ENCODE measurements at regions of chr9 and their contacts with region 1.

Region 1: DNA sequence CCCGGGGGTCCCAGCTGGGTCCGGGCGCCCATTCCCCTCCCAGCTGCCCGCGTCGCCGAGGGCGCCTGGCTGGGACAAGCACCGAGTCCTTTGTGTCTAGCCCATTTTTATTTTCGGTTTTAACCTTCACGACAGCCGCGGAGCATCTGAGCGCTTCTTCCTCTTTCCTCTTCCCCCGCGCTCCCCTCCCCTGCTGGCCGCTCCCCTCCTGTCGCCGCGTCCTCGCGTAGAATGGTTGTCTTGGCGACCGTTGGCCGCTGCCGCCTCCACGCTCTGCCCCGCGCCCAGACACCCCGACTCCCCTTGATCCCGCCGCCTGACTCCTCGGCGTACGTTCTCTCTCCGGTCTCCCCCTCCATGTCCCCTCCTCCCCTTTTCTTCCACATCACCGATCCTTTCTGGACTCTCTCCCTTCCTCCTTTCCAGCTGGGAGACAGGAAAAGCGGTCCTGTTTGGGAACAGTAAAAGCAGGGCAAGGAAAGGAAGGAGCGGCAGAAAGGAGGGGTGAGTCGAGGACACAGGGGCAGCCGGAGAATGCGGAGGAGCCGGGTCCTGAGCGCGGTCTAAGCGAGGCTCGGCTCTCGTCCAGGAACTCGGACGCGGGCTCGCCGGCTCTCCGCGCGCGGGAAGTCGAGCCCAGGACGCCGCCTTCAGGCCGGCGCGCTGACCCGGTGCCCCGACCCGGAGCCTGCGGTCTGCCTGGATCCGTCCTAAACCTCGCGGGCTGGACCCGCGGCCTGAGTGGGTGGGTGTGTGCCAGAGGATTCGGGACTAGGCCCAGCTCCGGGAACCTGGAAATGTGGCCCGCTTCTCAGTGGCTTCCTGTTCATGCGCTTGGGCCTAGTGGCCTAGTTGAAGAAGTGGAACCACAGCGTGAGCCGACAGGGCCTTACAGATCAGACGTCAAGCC is 841 bp downstream of the CDKN2B-AS1 start:
- DNase-seq: peak; percentile 93
- H3K4me3 ChIP-seq: peak overlapping the region; percentile 78
- H3K27ac ChIP-seq: peak overlapping the region; percentile 97
- H3K4me1 ChIP-seq: peaks cover 21% of the 10 kb centered on the region
- CTCF ChIP-seq: peak; percentile 59

Region 2: DNA sequence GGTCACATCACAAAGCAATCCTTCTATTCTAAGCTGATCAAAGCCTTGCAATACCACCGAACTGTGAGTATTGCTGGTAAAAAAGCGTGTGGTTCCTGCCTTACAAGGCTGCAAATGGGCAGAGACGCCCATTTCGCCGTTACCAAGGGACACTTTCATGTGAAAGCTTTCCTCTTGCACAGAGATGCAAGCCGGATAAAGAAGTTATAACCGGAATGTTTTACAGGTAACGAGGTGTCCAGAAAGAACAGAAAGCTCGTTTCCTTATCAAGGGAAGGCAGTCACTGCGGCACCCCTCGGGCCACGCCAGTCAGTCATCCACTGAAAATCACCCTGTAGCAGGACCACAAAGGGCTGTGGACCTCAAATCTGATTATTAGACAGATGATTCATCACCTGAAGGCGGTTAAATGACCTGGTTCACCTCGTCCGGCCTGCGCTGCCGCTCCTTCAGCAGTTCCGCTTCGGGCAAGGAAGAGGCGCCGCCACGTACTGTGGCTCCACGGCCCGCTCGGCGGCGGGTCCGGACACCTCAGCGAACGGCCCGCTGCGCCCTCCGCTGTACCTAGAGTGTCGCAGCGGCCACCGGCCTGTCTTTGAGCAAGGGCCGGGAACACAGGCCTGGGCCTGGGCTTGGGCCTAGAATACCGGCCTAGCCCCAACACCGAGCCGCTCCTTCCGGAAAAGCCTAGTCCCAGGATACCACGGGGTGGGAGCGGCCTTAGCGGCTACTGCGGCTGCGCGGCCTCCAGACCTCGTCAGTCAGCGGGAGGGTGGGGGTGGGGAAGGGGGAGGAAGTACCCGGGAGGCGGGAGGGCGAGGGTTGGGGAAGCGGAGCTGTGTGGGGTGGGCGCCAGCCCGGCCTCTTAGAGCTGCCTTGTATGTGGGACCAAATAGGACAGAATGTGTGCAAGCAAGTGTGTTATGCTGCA is 660.5 kb before region 1 on chr9 and contains the start of gene KLHL9:
- CTCF ChIA-PET with region 1: no interaction called
- POLR2A ChIA-PET with region 1: no interaction called
- intact Hi-C with region 1: loop called (anchors 5 kb)
- DNase-seq: peak; percentile 92
- H3K4me3 ChIP-seq: peak within 1 kb of the TSS; percentile 83
- H3K27ac ChIP-seq: peak within 1 kb of the TSS; percentile 62
- H3K4me1 ChIP-seq: peaks cover 45% of the 10 kb centered on the region
- CTCF ChIP-seq: no peak
- total RNA-seq, gene KLHL9: 19.3 and 19.9 TPM in 2 replicates

Region 3: GRCh38 chr9:21812946-21813568 is 182.4 kb before region 1 on chr9:
- CTCF ChIA-PET with region 1: no interaction called
- POLR2A ChIA-PET with region 1: no interaction called
- intact Hi-C with region 1: loop called (anchors 1 kb)
- DNase-seq: peak; percentile 72
- H3K4me3 ChIP-seq: no peak overlapping the region
- H3K27ac ChIP-seq: peak overlapping the region; percentile 32
- H3K4me1 ChIP-seq: peaks cover 22% of the 10 kb centered on the region
- CTCF ChIP-seq: peak; percentile 92

Region 4: DNA sequence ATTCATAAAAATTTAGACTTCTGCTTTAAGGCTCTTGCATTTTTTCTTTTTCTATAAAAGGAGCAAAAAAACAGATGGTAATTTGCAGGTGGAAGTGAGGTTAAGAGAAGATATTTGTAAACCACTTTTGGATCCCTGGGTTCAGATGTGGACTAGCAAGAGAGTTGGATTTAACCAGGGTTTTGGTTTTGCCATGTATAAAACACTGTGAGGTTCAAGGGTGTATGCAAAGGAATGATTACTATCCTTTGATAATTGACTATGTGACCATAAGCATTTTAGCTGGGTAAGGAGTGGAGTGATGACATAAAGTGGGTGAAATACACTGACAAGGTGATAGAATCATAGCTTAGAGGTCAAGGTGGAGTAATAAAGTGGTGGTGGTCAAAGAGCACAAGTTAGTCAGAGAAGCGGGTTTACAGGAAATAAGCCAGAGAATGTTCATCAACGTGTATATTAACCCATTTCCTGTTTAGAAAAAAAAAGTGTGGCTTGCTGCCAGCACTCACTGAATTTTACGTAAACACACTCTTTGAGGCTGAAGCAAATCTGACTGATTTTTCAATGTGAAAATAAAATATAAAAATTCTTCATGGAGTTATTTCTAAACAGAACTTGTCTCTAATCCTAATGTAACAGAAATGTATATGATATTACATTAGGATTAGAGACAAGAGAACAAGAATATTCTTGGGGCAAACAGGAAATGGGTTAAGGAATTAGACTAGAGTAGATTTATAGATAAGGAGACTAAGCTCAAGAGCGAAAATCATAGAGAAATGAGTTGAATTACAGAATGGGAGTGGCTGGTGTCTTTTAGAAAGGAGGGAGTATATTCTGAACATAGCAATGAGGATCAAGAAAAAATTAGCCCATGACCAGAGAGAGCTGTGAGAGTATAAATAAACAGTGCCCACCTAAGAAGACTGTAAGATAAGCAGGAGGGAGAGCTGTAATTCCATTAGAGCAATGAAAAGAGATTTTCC is 75.8 kb before region 1 on chr9:
- CTCF ChIA-PET with region 1: no interaction called
- POLR2A ChIA-PET with region 1: interaction called, 3 read pairs
- intact Hi-C with region 1: loop called (anchors 5 kb)
- DNase-seq: peak; percentile 68
- H3K4me3 ChIP-seq: peak overlapping the region; percentile 29
- H3K27ac ChIP-seq: peak overlapping the region; percentile 49
- H3K4me1 ChIP-seq: peaks cover 22% of the 10 kb centered on the region
- CTCF ChIP-seq: no peak

Region 5: GRCh38 chr9:22512495-22512894 is 517.1 kb after region 1 on chr9:
- CTCF ChIA-PET with region 1: no interaction called
- POLR2A ChIA-PET with region 1: no interaction called
- intact Hi-C with region 1: loop called (anchors 5 kb)
- DNase-seq: peak; percentile 95
- H3K4me3 ChIP-seq: peak overlapping the region; percentile 19
- H3K27ac ChIP-seq: peak overlapping the region; percentile 94
- H3K4me1 ChIP-seq: peaks cover 66% of the 10 kb centered on the region
- CTCF ChIP-seq: no peak

Measured in OCI-LY7 (cell line).